ENCODE measurements at regions of chr4 and their contacts with region 1.

Region 1: GRCh38 chr4:91904556-91904955 is 399.2 kb upstream of the GRID2 start:
- DNase-seq: no peak
- ATAC-seq: no peak
- H3K4me3 ChIP-seq: no peak overlapping the region
- H3K27ac ChIP-seq: no peak overlapping the region
- H3K4me1 ChIP-seq: no peaks in the 10 kb centered on the region
- H3K27me3 ChIP-seq: no peaks in the 10 kb centered on the region
- CTCF ChIP-seq: no peak
- POLR2A ChIP-seq: no peak

Region 2: DNA sequence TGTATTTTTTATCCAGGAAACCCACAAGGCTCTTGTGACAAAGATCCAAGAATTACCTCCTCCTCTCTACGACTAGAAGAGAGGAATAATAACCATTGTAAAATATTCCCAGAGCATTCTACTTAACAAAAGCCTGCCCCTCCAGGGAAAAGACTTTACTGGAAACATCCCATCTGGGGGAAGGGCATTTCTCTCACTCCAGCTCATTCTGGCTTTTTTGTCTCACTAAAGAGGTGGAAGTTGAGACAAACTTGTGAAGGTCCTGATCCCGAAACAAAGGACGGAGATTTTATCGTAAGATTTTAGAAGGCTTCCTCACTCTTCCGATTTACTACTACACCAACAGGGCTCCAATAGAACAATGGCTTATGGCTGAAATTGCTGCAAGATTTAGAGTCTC is 292.8 kb before region 1 on chr4:
- intact Hi-C with region 1: no loop called
- DNase-seq: no peak
- ATAC-seq: no peak
- H3K4me3 ChIP-seq: no peak overlapping the region
- H3K27ac ChIP-seq: no peak overlapping the region
- H3K4me1 ChIP-seq: no peaks in the 10 kb centered on the region
- H3K27me3 ChIP-seq: no peaks in the 10 kb centered on the region
- CTCF ChIP-seq: no peak
- POLR2A ChIP-seq: no peak

Region 3: DNA sequence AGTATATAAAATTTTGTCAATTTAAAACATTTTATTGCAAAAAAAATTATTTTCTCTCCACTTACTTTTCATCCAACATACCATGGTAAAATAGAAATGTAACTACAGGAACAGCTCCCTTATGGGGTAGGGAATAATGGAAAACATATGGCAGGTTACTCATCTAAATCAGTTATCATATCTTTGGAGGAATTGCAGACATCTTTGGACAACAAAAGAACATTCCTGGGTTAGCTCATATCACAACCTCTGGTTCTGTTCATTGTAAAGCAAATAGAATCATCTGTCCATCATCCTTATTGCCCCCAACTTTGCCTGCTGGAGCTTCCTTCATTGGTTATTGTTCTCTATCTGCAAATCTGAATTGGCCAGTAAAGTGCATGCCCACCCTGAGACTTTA is 11.7 kb after region 1 on chr4:
- intact Hi-C with region 1: loop called in 1 of 10 experiments (anchors 2 kb)
- DNase-seq: no peak
- ATAC-seq: no peak
- H3K4me3 ChIP-seq: no peak overlapping the region
- H3K27ac ChIP-seq: no peak overlapping the region
- H3K4me1 ChIP-seq: no peaks in the 10 kb centered on the region
- H3K27me3 ChIP-seq: no peaks in the 10 kb centered on the region
- CTCF ChIP-seq: no peak
- POLR2A ChIP-seq: no peak

Region 4: GRCh38 chr4:92066485-92066884 is 161.9 kb after region 1 on chr4:
- intact Hi-C with region 1: loop called in 1 of 10 experiments (anchors 5 kb)
- DNase-seq: no peak
- ATAC-seq: no peak
- H3K4me3 ChIP-seq: no peak overlapping the region
- H3K27ac ChIP-seq: no peak overlapping the region
- H3K4me1 ChIP-seq: no peaks in the 10 kb centered on the region
- H3K27me3 ChIP-seq: no peaks in the 10 kb centered on the region
- CTCF ChIP-seq: no peak
- POLR2A ChIP-seq: no peak

Measured in heart left ventricle (tissue), 16 donors.